ENCODE measurements at regions of chr11 and their contacts with region 1.

Region 1: DNA sequence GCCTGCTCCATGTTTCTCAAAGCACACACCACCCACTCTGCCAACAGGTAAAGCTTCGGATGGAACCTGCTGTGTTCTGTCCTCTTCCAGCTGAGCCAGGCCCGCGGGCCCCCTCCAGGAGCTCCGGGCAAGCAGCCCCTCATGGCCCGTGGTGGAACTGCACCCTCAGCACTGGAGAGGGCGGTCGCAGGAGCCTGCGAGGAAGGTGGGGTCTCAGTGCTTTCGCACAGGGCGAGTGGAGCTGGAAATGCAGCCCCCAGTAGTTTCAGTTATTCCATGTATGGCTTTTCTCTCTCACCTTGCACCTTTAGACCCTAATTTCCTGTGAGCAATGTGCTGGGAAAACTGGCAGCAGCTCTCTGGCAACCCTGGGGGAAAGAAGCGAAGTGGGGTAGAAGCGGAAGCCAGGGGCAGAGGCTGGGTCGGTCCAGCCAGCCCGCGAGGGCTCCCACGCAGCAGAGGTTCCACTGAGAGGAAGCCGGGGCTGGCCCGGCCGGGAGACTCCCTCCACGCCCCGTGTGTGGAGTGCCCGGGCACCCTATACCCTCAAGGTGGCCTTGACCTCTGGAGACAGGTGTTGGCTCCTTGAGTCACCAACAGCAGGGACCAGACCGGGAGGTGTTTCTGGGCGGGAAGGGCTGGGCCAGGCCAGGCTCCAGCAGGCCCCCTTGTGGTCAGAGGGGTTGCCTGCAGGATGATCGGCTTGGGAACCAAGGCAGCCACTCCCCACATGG is 119.9 kb upstream of the TMEM45B start:
- DNase-seq: peak; percentile 76 to 83
- H3K4me3 ChIP-seq: no peak overlapping the region
- H3K4me3 Mint-ChIP-seq: no peak overlapping the region
- H3K27ac Mint-ChIP-seq: no peak overlapping the region
- H3K4me1 ChIP-seq: peaks cover 7% of the 10 kb centered on the region; the same call in 1 of the 2 replicates
- H3K4me1 Mint-ChIP-seq: peaks cover 5% of the 10 kb centered on the region
- H3K27me3 ChIP-seq: no peaks in the 10 kb centered on the region
- H3K27me3 Mint-ChIP-seq: no peaks in the 10 kb centered on the region
- CTCF ChIP-seq: peak; percentile 83 to 92

Region 2: GRCh38 chr11:129652828-129653227 is 42.9 kb before region 1 on chr11:
- CTCF ChIA-PET with region 1: interaction called, 11 read pairs
- POLR2A ChIA-PET with region 1: no interaction called
- intact Hi-C with region 1: no loop called
- DNase-seq: no peak
- H3K4me3 ChIP-seq: no peak overlapping the region
- H3K4me3 Mint-ChIP-seq: no peak overlapping the region
- H3K27ac Mint-ChIP-seq: no peak overlapping the region
- H3K4me1 ChIP-seq: no peaks in the 10 kb centered on the region
- H3K4me1 Mint-ChIP-seq: no peaks in the 10 kb centered on the region
- H3K27me3 ChIP-seq: no peaks in the 10 kb centered on the region
- H3K27me3 Mint-ChIP-seq: peaks cover 3% of the 10 kb centered on the region
- CTCF ChIP-seq: no peak

Region 3: GRCh38 chr11:130247319-130247718 is 551.6 kb after region 1 on chr11:
- CTCF ChIA-PET with region 1: no interaction called
- POLR2A ChIA-PET with region 1: no interaction called
- intact Hi-C with region 1: no loop called
- DNase-seq: no peak
- H3K4me3 ChIP-seq: no peak overlapping the region
- H3K4me3 Mint-ChIP-seq: no peak overlapping the region
- H3K27ac Mint-ChIP-seq: no peak overlapping the region
- H3K4me1 ChIP-seq: no peaks in the 10 kb centered on the region
- H3K4me1 Mint-ChIP-seq: peaks cover 14% of the 10 kb centered on the region
- H3K27me3 ChIP-seq: no peaks in the 10 kb centered on the region
- H3K27me3 Mint-ChIP-seq: no peaks in the 10 kb centered on the region
- CTCF ChIP-seq: no peak

Measured in Caco-2 (cell line).